ENCODE measurements at regions of chr22 and their contacts with region 1.

Region 1: GRCh38 chr22:19932367-19933206 is 9.0 kb upstream of the COMT start:
- DNase-seq: no peak
- H3K4me3 ChIP-seq: no peak overlapping the region
- H3K27ac ChIP-seq: no peak overlapping the region
- H3K4me1 ChIP-seq: no peaks in the 10 kb centered on the region
- H3K27me3 ChIP-seq: no peaks in the 10 kb centered on the region
- CTCF ChIP-seq: no peak
- POLR2A ChIP-seq: no peak

Region 2: GRCh38 chr22:19859861-19860510 is 72.6 kb before region 1 on chr22:
- intact Hi-C with region 1: loop called (anchors 2 kb)
- DNase-seq: no peak
- H3K4me3 ChIP-seq: no peak overlapping the region
- H3K27ac ChIP-seq: no peak overlapping the region
- H3K4me1 ChIP-seq: peaks cover 0 to 8% of the 10 kb centered on the region in 2 donors
- H3K27me3 ChIP-seq: no peaks in the 10 kb centered on the region
- CTCF ChIP-seq: no peak
- POLR2A ChIP-seq: no peak

Region 3: GRCh38 chr22:19918332-19919106 is 14.1 kb before region 1 on chr22:
- intact Hi-C with region 1: loop called (anchors 1 kb)
- DNase-seq: no peak
- H3K4me3 ChIP-seq: no peak overlapping the region
- H3K27ac ChIP-seq: no peak overlapping the region
- H3K4me1 ChIP-seq: no peaks in the 10 kb centered on the region
- H3K27me3 ChIP-seq: no peaks in the 10 kb centered on the region
- CTCF ChIP-seq: no peak
- POLR2A ChIP-seq: no peak

Region 4: DNA sequence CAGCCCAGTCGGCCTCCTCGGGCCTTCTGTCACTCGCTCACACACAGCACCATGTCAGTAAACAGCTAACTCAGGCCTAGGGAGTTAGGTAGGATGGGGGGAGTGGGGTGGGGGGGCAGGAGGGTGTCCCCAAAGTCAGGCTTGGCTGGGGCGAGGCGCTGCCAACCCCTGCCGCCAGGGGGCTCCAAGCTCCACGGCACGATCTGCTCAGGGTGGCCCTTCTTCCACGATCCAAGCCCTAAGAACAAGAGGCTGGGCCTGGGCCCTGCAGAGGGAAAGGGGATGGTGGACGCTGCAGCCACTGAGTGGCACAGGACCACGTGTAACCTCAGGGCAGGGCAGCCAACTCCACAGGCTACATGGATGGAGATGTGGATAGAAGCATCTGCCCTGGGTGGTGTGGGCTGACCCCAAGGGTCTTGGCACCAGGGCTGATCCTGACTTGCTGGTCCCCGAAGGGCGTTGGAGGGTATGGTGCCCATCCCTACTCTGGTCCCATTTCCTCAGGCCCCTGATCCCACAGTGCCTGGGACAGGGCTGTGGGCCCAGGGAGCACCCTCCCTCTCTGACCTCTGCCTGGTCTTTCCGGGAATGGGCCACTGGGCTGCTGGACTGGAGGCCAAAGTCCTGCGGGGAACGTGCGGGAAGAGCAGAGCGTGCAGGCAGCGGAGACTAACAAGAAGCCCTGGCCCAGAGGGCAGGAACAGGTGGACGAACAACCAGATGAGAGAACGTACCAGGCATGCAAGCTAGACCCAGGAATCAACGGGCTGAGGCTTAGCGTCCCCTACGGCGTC is 38.1 kb after region 1 on chr22:
- intact Hi-C with region 1: loop called (anchors 1 kb)
- DNase-seq: peak in 1 of 2 donors; percentile 70
- H3K4me3 ChIP-seq: no peak overlapping the region
- H3K27ac ChIP-seq: peak overlapping the region in 1 of 2 donors; percentile 40
- H3K4me1 ChIP-seq: no peaks in the 10 kb centered on the region
- H3K27me3 ChIP-seq: no peaks in the 10 kb centered on the region
- CTCF ChIP-seq: peak; percentile 69 to 86 (median 69)
- POLR2A ChIP-seq: no peak